Activated naive CD4-positive, alpha-beta T cell treated with anti-CD3 and anti-CD28 coated beads for 36 hours (primary cell): ENCODE measurements at regions of chr17 and their contacts with region 1.

Region 1: DNA sequence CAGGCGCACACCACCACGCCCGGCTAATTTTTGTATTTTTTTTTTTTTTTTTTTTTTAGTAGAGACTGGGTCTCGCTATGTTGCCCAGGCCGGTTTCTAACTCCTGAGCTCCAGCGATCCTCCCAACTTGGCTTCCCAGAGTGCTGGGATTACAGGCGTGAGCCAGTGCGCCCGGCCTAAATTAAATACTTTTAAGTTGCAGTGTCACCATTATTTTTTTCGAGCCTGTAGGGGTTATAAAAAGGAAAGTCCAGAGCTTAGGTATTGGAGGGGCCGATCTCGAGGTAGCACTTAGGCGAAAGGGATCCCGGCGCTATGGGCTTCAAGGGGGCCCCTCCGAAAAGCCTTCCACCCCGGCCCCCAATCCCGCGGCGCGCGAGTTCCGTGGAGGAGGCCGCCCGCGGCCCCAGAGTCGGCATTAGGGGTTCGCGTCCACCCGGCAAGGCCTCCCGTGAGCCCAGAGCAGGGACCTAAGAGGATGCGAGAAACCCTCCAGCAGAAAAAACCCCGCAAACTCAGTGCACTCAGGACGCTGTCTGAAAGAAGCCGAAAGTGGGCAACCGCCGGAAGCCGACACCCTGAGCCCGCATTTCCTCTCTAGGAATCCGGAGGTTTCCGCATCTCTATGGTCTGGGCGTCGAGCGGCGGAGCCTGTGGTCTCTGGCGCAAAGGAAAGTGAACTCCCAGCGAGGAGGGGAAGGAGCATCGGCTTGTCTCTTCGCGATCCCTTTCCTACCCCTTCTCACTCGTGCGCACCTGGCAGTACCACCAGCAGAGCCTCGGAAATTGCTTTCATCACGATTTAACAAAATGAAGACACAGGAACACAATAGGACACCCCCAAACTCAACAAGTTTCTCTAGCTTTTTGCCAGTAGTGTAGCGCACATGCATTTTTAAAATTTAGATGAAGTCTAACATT is 14.1 kb upstream of the RGS9 start:
- DNase-seq: peak; percentile 90
- H3K4me3 Mint-ChIP-seq: peak overlapping the region; percentile 78
- H3K27ac Mint-ChIP-seq: peak overlapping the region; percentile 91
- H3K4me1 Mint-ChIP-seq: peaks cover 25% of the 10 kb centered on the region
- H3K27me3 Mint-ChIP-seq: peaks cover 5% of the 10 kb centered on the region

Region 2: GRCh38 chr17:64920026-64920418 is 203.1 kb before region 1 on chr17:
- CTCF ChIA-PET with region 1: no interaction called
- intact Hi-C with region 1: no loop called
- DNase-seq: no peak
- H3K4me3 Mint-ChIP-seq: peak overlapping the region; percentile 83
- H3K27ac Mint-ChIP-seq: peak overlapping the region; percentile 70
- H3K4me1 Mint-ChIP-seq: peaks cover 10% of the 10 kb centered on the region
- H3K27me3 Mint-ChIP-seq: no peaks in the 10 kb centered on the region

Region 3: DNA sequence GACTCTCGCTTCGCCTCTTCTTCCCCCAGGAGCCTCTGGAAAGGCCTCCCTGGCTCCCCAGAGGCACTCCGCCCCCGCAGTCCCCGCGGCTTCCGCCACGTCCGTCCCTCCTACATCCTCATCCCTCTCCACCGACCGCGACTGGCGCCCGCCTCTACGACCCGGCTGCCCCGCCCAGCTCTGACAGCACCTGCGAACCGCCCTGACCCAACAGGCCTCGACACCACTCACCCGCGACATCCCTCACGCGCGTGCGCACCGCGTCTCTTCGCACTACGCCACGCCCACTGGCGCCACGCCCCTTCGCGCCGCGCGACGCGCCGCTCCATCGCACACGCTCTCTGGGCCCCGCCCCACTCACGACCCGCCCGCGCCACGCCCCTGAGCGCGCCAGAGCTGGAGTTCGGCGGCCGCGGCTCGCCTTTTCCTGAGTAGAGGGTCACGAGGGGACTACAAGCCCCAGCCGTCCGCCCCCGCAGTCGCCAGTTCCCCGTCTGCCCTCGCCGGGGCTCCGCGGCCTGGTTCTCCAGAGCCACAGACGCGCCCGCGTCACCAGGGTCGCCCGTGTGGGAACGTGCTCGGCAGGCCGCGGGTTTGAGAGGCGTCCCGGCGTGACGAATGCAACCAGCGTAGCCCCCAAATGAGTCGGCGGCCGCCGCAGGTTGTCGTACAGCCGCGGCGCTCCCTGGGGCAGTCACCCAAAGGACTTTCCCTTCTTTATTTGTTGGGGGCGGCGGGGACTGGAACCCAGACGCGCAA is 147.6 kb before region 1 on chr17:
- CTCF ChIA-PET with region 1: no interaction called
- intact Hi-C with region 1: loop called (anchors 1 kb)
- DNase-seq: peak; percentile 94
- H3K4me3 Mint-ChIP-seq: peak overlapping the region; percentile 90
- H3K27ac Mint-ChIP-seq: peak overlapping the region; percentile 91
- H3K4me1 Mint-ChIP-seq: peaks cover 45% of the 10 kb centered on the region
- H3K27me3 Mint-ChIP-seq: no peaks in the 10 kb centered on the region

Region 4: DNA sequence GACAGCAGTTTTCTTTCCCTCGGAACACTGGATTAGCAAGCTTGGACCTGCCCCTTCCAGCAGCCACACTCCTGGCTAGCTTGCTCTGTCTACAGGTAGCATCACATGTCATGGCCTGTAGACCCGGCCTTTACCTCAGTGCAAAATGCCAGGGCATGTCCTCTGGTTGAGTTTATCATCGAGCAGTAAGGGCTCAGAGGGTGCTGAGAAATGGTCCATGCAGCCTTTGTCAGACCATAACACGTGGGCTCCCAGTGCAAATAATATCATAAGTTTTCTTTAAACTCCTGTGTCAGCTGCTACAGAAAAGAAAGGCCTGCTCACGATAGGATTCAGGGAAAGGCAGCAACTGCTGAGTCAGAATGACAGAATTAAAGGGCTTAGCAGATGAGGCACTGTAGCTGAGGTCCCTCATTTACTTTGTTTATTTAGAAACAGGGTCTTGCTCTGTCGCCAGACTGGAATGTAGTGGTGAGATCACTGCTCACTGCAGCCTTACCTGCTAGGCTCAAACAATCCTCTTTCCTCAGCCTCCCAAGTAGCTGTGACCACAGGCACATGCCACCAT is 58.6 kb before region 1 on chr17:
- CTCF ChIA-PET with region 1: no interaction called
- intact Hi-C with region 1: no loop called
- DNase-seq: no peak
- H3K4me3 Mint-ChIP-seq: no peak overlapping the region
- H3K27ac Mint-ChIP-seq: no peak overlapping the region
- H3K4me1 Mint-ChIP-seq: no peaks in the 10 kb centered on the region
- H3K27me3 Mint-ChIP-seq: no peaks in the 10 kb centered on the region

Region 5: DNA sequence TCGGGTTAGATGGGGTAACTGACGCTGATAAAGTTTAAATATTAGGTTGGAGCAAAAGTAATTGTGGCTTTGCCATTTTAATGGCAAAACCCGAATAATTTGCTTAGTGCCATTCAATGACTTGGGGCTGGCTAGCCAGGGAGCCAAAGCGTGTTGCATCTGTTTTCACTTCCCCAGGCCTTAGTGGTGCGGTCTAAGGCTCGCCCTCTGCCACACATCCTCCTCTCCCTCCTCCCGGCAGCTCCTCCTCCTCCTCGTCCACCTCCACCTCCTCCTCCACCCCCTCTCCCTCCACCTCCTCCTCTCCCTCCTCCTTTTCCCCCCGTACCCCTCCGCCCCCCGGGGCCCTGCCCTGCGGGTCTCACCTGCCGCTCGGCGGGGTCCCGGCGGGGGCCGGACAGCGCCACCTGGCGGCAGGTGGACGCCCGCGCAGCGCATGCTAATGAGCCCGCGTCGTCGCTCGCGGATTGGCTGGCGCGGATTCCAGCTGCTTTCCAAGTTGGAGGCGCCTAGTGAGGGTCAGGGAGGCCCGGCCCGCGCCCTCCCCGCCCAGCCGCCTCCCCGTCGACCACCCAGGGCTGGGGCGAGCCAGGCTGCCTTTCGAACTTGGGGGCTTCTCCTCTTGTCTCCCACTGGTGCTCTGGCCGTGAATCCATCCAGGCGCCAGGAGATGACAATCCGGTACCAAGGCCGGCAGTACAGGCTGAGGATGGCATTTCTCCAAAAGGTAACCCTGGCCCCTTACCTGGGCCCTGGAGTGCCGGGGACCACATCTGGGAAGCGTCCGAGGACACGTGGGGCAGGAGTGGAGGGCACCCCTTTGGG is 22.6 kb before region 1 on chr17:
- CTCF ChIA-PET with region 1: interaction called, 6 read pairs
- intact Hi-C with region 1: loop called (anchors 1 kb)
- DNase-seq: peak; percentile 74
- H3K4me3 Mint-ChIP-seq: peak overlapping the region; percentile 86
- H3K27ac Mint-ChIP-seq: peak overlapping the region; percentile 95
- H3K4me1 Mint-ChIP-seq: peaks cover 16% of the 10 kb centered on the region
- H3K27me3 Mint-ChIP-seq: no peaks in the 10 kb centered on the region

Region 6: GRCh38 chr17:65173284-65173793 is 50.2 kb after region 1 on chr17:
- CTCF ChIA-PET with region 1: no interaction called
- intact Hi-C with region 1: loop called (anchors 2 kb)
- DNase-seq: peak; percentile 85
- H3K4me3 Mint-ChIP-seq: no peak overlapping the region
- H3K27ac Mint-ChIP-seq: peak overlapping the region; percentile 55
- H3K4me1 Mint-ChIP-seq: peaks cover 11% of the 10 kb centered on the region
- H3K27me3 Mint-ChIP-seq: no peaks in the 10 kb centered on the region

Region 7: DNA sequence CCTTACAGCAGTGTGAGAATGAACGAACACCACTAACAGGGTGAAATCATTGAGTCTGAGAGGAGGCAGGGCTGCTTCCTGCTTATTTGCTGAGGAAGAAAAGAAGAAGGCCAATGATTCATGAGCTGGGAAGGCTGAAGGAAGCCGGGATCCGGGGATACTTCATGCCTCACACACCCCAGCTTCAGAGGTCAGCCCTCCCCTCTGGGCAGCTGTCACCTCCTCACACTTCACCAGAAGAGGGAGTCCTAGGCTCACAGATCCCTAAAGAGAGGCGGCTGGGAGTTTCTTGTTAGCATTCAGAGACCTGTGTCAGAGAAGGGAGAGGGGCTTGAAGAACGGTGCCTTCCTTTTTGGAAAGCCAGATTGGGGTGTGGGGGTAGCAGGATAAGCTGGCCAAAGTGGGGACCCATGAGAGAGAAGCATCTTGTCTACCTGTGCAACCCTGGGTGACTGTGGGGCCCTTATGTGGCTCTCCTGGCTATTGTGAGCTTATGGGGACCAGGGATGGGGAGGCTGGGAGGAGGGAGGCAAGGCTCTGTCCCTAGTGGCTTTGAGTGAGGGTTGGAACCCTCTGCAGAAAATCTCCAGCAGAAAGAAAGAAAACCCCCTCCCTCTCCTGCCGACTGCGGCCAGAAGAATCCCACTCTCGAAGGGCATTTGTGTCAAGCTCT is 108.7 kb after region 1 on chr17:
- CTCF ChIA-PET with region 1: no interaction called
- intact Hi-C with region 1: loop called (anchors 1 kb)
- DNase-seq: peak; percentile 74
- H3K4me3 Mint-ChIP-seq: no peak overlapping the region
- H3K27ac Mint-ChIP-seq: no peak overlapping the region
- H3K4me1 Mint-ChIP-seq: peaks cover 27% of the 10 kb centered on the region
- H3K27me3 Mint-ChIP-seq: peaks cover 15% of the 10 kb centered on the region